Activated CD4-positive, alpha-beta memory T cell treated with anti-CD3 and anti-CD28 coated beads for 36 hours (primary cell): ENCODE measurements at regions of chr4 and their contacts with region 1.

Region 1: DNA sequence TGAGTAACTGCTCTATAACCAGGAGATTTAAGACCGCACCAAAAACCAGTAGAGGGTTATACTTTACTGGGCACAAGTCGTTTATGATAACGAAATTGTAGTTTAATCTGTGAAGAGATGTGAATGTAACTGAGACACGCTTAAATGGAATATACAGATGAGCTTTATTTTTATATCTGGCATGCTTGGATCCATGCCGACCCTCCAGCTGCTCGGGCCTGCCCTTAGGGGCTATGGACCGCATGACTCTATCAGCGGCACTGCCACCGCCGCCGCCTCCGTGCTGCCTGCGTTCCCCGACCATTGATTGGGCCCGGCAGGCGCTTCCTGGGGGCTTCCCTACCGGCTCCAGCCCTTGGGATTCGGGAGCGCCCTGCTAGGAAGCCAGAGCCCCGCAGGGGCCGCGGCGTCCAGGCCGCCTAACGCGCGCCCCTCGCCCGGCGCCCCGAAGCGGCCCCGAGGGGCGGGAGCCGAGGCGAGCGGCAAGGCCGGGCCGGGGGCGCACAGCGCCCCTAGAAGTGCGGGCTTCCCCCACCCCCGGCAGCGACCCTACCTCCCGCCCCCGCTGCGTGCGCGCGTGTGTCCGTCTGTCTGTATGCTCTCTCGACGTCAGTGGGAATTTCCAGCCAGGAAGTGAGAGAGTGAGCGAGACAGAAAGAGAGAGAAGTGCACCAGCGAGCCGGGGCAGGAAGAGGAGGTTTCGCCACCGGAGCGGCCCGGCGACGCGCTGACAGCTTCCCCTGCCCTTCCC is at the start of gene NFKB1:
- DNase-seq: peak; percentile 87
- H3K4me3 Mint-ChIP-seq: peak within 1 kb of the TSS; percentile 94
- H3K27ac Mint-ChIP-seq: peak within 1 kb of the TSS; percentile 95
- H3K4me1 Mint-ChIP-seq: peaks cover 22% of the 10 kb centered on the region
- H3K27me3 Mint-ChIP-seq: no peaks in the 10 kb centered on the region
- total RNA-seq, gene NFKB1: 122 to 133 TPM

Region 2: DNA sequence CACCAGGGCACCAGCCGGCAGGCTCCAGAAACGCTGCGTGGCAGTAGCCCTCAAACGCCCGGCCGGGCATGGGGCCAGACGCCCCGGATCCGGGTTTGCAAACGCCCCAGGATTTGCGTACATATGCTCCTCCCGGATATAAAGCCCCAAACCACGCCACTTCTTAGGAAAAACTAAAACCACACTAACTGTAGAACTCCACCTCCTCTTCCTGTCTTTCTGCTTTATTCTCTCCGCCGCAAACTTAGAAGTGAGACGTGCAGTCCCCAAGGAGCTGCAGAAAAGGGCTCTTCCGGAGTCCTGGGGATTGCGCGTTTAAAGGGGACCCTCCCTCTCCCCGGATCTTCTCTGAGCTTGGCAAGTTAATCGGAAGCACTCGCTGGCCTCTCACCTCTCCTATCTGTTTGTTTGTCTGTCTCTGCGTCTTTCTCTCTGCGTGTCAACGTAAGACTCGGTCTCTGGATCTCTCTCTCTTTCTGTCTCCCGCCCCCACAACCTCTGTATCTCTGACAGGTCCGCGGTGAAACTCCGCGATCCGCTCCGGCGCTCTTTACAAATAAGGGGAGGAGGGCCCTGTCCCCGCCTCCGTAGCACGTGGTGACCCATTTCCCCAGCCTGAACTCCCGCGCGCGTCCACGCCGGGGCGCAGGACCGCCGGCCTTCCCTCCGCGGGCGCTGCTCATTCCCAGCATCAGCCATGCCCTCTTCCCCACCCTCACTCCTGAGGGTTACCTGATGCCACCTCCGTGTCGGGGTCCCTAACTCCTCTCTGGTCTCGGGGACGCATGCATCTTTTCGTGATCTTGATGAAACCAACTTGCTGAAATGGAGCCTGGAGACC is 155.7 kb before region 1 on chr4 and contains the start of gene SLC39A8:
- CTCF ChIA-PET with region 1: interaction called, 3 read pairs
- POLR2A ChIA-PET with region 1: interaction called, 12 read pairs
- intact Hi-C with region 1: loop called (anchors 1 kb)
- DNase-seq: peak; percentile 95
- H3K4me3 Mint-ChIP-seq: peak within 1 kb of the TSS; percentile 78
- H3K27ac Mint-ChIP-seq: peak within 1 kb of the TSS; percentile 96
- H3K4me1 Mint-ChIP-seq: peaks cover 43% of the 10 kb centered on the region
- H3K27me3 Mint-ChIP-seq: peaks cover 1% of the 10 kb centered on the region
- total RNA-seq, gene SLC39A8: 64.6 to 66.9 TPM

Region 3: DNA sequence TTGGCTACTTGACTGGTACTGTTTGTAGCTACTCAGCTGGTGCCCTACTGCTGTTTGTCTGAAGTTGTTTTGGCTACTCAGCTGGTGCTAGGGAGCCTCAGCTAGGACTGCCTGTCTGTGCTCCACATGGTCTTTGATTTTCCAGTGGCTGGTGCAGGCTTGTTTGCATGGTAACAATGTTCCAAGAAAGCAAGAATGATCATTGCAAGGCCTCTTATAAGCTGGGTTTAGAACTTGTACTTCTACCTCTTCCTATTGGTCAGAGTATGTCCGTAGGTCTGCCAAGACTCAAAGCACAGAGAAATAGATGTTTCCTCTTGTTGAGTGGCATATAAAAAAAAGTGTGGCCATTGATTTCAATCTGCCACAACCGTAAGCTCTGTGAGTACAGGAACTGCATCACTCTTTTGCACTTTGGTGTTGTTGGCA is 17.8 kb after region 1 on chr4:
- CTCF ChIA-PET with region 1: interaction called, 3 read pairs
- POLR2A ChIA-PET with region 1: no interaction called
- intact Hi-C with region 1: loop called (anchors 2 kb)
- DNase-seq: peak; percentile 20
- H3K4me3 Mint-ChIP-seq: no peak overlapping the region
- H3K27ac Mint-ChIP-seq: peak overlapping the region; percentile 66
- H3K4me1 Mint-ChIP-seq: peaks cover 76% of the 10 kb centered on the region
- H3K27me3 Mint-ChIP-seq: no peaks in the 10 kb centered on the region

Region 4: DNA sequence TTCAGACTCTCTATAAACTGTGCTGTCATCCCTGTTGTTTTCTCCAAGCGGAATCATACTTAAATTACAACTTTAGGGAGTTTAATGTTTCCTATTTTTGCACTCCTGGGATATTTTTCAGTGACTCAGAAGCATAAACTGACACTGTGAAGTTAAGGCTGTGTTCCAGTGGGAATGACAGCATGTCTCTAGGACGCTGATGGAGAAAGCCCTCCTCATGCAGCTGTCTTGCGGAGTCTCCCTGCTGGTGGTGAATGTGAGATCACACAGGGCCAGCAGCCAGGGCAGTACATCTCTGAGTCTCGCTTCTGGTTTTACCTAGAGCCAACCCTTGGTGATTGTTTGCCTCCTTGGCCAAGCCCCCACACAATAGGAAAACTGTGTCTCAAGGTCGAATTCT is 53.6 kb after region 1 on chr4:
- CTCF ChIA-PET with region 1: interaction called, 6 read pairs
- POLR2A ChIA-PET with region 1: no interaction called
- intact Hi-C with region 1: loop called (anchors 2 kb)
- DNase-seq: no peak
- H3K4me3 Mint-ChIP-seq: no peak overlapping the region
- H3K27ac Mint-ChIP-seq: no peak overlapping the region
- H3K4me1 Mint-ChIP-seq: peaks cover 64% of the 10 kb centered on the region
- H3K27me3 Mint-ChIP-seq: no peaks in the 10 kb centered on the region

Region 5: DNA sequence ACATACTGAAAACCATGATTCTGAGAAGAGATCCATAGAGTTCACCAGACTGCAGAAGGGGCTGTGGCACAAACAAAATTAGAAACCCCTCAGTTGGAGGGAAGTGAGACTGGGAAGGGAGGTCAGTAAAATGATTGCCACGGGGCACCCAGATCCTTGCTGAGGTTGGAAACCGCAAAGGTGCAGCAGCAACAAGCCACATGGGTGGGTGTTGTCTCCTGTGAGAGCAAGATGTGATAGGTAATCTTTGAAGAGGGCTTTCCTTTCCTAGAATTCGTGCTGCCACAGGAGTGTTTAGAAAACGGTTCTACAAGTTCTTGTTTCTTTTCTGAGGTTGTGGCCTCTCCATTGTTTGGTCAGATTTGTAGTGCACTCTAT is 85.8 kb after region 1 on chr4:
- CTCF ChIA-PET with region 1: no interaction called
- POLR2A ChIA-PET with region 1: no interaction called
- intact Hi-C with region 1: loop called (anchors 1 kb)
- DNase-seq: peak; percentile 60
- H3K4me3 Mint-ChIP-seq: no peak overlapping the region
- H3K27ac Mint-ChIP-seq: peak overlapping the region; percentile 83
- H3K4me1 Mint-ChIP-seq: peaks cover 84% of the 10 kb centered on the region
- H3K27me3 Mint-ChIP-seq: no peaks in the 10 kb centered on the region

Region 6: GRCh38 chr4:102620697-102621497 is 120.0 kb after region 1 on chr4:
- CTCF ChIA-PET with region 1: interaction called, 5 read pairs
- POLR2A ChIA-PET with region 1: interaction called, 3 read pairs
- intact Hi-C with region 1: loop called (anchors 1 kb)
- DNase-seq: no peak
- H3K4me3 Mint-ChIP-seq: no peak overlapping the region
- H3K27ac Mint-ChIP-seq: peak overlapping the region; percentile 76
- H3K4me1 Mint-ChIP-seq: peaks cover 49% of the 10 kb centered on the region
- H3K27me3 Mint-ChIP-seq: no peaks in the 10 kb centered on the region

Region 7: GRCh38 chr4:103019308-103020124 is 518.6 kb after region 1 on chr4 and contains the start of gene SLC9B1:
- CTCF ChIA-PET with region 1: no interaction called
- POLR2A ChIA-PET with region 1: no interaction called
- intact Hi-C with region 1: loop called (anchors 1 kb)
- DNase-seq: peak; percentile 97
- H3K4me3 Mint-ChIP-seq: peak within 1 kb of the TSS; percentile 84
- H3K27ac Mint-ChIP-seq: peak within 1 kb of the TSS; percentile 92
- H3K4me1 Mint-ChIP-seq: peaks cover 15% of the 10 kb centered on the region
- H3K27me3 Mint-ChIP-seq: no peaks in the 10 kb centered on the region
- total RNA-seq, gene SLC9B1: 1.9 to 2.4 TPM